Kidney (tissue), 22 donors: ENCODE measurements at regions of chr12 and their contacts with region 1.

Region 1: GRCh38 chr12:89529738-89530137 is 3.9 kb upstream of the POC1B start:
- DNase-seq: peak in 2 of 5 donors; percentile 70 to 79
- H3K4me3 ChIP-seq: no peak overlapping the region
- H3K27ac ChIP-seq: no peak overlapping the region
- H3K4me1 ChIP-seq: no peaks in the 10 kb centered on the region
- H3K27me3 ChIP-seq: no peaks in the 10 kb centered on the region
- CTCF ChIP-seq: peak; percentile 67

Region 2: GRCh38 chr12:89470741-89471509 is 58.8 kb before region 1 on chr12:
- intact Hi-C with region 1: loop called (anchors 10 kb)
- DNase-seq: peak in 2 of 5 donors; percentile 52 to 73
- H3K4me3 ChIP-seq: no peak overlapping the region
- H3K27ac ChIP-seq: no peak overlapping the region
- H3K4me1 ChIP-seq: no peaks in the 10 kb centered on the region
- H3K27me3 ChIP-seq: no peaks in the 10 kb centered on the region
- CTCF ChIP-seq: peak; percentile 67